Pancreas (tissue), 10 donors: ENCODE measurements at regions of chr5 and their contacts with region 1.

Region 1: GRCh38 chr5:97243353-97243752 is 60.3 kb upstream of the RIOK2 start:
- DNase-seq: no peak
- ATAC-seq: no peak
- H3K4me3 ChIP-seq: no peak overlapping the region
- H3K27ac ChIP-seq: no peak overlapping the region
- H3K4me1 ChIP-seq: no peaks in the 10 kb centered on the region
- H3K27me3 ChIP-seq: no peaks in the 10 kb centered on the region
- CTCF ChIP-seq: no peak

Region 2: DNA sequence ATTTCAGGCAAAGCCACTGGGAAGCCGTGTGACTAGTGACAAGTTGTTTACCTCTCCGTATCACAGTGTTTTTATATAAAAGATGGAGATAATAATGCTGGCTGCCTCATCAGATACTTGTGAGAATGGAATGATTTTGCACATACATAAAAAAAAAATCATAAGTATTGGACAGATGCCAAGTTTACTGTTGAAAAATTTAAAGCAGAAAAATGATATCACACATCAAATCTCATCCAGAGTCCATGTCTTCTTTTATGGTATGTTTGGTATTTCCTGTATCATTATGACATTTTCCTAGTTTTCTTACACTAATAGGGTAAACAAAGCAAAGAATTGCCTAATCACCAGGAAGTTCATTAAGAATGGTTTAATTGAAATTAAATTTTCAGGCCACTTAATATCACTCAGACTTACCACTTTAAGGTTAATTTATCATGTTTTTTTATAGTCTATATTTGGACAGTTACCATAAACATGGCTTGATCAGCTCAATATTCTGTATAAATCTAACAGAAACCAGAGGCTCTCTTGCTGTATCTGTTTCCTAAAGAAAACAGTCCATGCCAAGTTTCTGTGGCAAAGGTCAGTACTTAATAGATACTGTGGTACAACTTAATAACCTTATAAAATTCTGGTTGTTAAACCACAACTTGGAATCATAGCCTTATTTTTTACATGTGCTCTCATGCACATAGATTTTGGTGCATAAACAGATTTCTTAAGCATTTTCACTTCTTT is 596.2 kb after region 1 on chr5:
- intact Hi-C with region 1: loop called in 1 of 3 experiments (anchors 10 kb)
- DNase-seq: no peak
- ATAC-seq: no peak
- H3K4me3 ChIP-seq: no peak overlapping the region
- H3K27ac ChIP-seq: no peak overlapping the region
- H3K4me1 ChIP-seq: no peaks in the 10 kb centered on the region
- H3K27me3 ChIP-seq: no peaks in the 10 kb centered on the region
- CTCF ChIP-seq: no peak